ENCODE measurements at regions of chr7 and their contacts with region 1.

Region 1: GRCh38 chr7:95723592-95724180 is 48.7 kb upstream of the DYNC1I1 start:
- DNase-seq: peak; percentile 72
- H3K4me3 ChIP-seq: no peak overlapping the region
- H3K27ac ChIP-seq: no peak overlapping the region
- H3K4me1 ChIP-seq: no peaks in the 10 kb centered on the region
- H3K27me3 ChIP-seq: no peaks in the 10 kb centered on the region; the same call in 1 of the 2 replicates
- CTCF ChIP-seq: peak; percentile 59
- EP300 ChIP-seq: no peak
- RAD21 ChIP-seq: peak; percentile 96

Region 2: DNA sequence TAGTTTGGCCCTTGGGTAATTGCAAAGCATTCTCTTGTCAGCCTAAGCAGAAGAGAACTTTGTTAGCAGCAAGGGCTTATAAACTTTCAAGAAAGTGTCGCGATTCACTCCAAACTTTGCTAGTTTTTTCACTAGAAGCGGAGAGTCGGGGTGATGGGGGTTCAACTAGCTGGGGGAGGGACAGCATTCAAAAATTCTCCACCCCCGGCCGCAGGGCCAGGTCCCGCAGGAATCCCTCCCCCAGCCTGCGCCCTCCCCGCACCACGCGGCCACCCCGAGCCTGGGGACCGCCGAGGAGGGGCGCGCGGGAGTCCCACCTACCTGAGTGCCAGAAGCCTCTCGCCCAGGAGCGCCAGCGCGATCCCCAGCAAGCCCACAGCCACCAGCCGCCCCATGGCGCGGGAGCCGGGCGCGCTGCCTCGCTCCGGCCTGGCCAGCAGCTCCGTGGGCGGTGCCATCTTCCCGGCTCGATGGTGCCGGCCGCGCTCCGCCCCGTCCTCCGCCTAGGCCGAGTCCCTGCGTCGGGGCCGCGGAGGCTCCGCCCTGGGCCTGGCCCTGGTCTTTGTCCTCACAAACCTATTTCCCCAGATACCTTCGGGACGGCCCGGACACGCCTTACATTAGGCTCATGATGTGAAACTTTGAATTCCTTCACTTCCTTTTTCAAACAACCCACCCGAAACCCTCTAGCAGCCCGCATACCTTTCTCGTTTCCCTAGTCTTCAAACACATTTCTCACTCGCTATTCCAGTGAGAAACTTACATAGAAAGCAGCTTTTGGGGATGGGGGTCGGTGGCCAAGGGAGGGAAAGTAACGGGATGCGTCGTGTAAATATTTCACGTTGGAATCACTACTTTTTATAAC is 288.9 kb before region 1 on chr7 and contains the start of gene PON2:
- CTCF ChIA-PET with region 1: no interaction called
- POLR2A ChIA-PET with region 1: no interaction called
- DNase-seq: peak; percentile 94
- H3K4me3 ChIP-seq: peak within 1 kb of the TSS; percentile 70 to 72
- H3K27ac ChIP-seq: peak within 1 kb of the TSS; percentile 64 to 83
- H3K4me1 ChIP-seq: peaks cover 0 to 6% of the 10 kb centered on the region in 2 experiments; a peak in 1 of 4 replicates
- H3K27me3 ChIP-seq: no peaks in the 10 kb centered on the region
- CTCF ChIP-seq: no peak
- EP300 ChIP-seq: no peak
- RAD21 ChIP-seq: no peak
- polyA plus RNA-seq, gene PON2: 125 and 162 TPM in 2 replicates

Region 3: GRCh38 chr7:95710711-95711110 is 13.0 kb before region 1 on chr7:
- CTCF ChIA-PET with region 1: interaction called, 10 read pairs
- POLR2A ChIA-PET with region 1: no interaction called
- DNase-seq: no peak
- H3K4me3 ChIP-seq: no peak overlapping the region
- H3K27ac ChIP-seq: no peak overlapping the region
- H3K4me1 ChIP-seq: no peaks in the 10 kb centered on the region
- H3K27me3 ChIP-seq: no peaks in the 10 kb centered on the region
- CTCF ChIP-seq: no peak
- EP300 ChIP-seq: no peak
- RAD21 ChIP-seq: no peak

Region 4: DNA sequence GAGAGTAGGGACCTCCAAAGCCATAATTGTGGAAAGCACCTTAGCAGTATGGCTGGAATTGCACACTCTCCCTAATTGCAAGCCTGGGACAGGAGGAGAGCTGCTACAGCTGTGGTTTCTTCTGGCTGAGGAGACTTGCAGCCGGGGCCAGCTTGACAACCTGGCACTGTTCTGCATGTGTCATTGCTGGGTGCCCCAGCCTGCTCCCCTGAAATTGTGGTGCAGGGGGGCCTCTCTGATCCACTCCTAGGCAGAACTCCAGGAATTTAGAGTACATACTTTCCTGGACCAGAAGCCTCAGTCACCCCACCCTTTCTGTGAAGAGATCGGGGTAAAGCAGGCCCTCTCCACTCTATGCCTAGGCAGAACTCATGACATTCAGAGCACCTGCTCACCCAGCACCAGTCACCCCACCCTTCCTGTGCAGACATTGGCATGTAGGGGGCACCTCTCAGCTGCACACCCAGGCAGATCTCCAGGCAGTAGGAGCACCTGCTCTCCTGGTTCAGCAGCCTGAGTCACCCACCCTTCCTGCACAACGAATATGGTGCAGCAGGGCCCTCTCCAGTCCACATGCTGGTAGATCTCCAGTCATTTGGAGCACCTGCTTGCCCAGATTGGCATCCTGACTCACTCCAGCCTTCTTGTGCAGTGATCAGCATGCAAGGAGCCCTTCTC is 14.3 kb after region 1 on chr7:
- CTCF ChIA-PET with region 1: interaction called, 24 read pairs
- POLR2A ChIA-PET with region 1: no interaction called
- DNase-seq: no peak
- H3K4me3 ChIP-seq: no peak overlapping the region
- H3K27ac ChIP-seq: no peak overlapping the region
- H3K4me1 ChIP-seq: no peaks in the 10 kb centered on the region
- H3K27me3 ChIP-seq: 0 out of 2 replicates have a peak, but pooled peaks cover 4% of the 10 kb centered on the region
- CTCF ChIP-seq: no peak
- EP300 ChIP-seq: no peak
- RAD21 ChIP-seq: no peak

Region 5: GRCh38 chr7:95758187-95758586 is 34.5 kb after region 1 on chr7:
- CTCF ChIA-PET with region 1: interaction called, 12 read pairs
- POLR2A ChIA-PET with region 1: no interaction called
- DNase-seq: no peak
- H3K4me3 ChIP-seq: no peak overlapping the region
- H3K27ac ChIP-seq: no peak overlapping the region
- H3K4me1 ChIP-seq: no peaks in the 10 kb centered on the region
- H3K27me3 ChIP-seq: no peaks in the 10 kb centered on the region; the same call in 1 of the 2 replicates
- CTCF ChIP-seq: no peak
- EP300 ChIP-seq: no peak
- RAD21 ChIP-seq: no peak

Region 6: DNA sequence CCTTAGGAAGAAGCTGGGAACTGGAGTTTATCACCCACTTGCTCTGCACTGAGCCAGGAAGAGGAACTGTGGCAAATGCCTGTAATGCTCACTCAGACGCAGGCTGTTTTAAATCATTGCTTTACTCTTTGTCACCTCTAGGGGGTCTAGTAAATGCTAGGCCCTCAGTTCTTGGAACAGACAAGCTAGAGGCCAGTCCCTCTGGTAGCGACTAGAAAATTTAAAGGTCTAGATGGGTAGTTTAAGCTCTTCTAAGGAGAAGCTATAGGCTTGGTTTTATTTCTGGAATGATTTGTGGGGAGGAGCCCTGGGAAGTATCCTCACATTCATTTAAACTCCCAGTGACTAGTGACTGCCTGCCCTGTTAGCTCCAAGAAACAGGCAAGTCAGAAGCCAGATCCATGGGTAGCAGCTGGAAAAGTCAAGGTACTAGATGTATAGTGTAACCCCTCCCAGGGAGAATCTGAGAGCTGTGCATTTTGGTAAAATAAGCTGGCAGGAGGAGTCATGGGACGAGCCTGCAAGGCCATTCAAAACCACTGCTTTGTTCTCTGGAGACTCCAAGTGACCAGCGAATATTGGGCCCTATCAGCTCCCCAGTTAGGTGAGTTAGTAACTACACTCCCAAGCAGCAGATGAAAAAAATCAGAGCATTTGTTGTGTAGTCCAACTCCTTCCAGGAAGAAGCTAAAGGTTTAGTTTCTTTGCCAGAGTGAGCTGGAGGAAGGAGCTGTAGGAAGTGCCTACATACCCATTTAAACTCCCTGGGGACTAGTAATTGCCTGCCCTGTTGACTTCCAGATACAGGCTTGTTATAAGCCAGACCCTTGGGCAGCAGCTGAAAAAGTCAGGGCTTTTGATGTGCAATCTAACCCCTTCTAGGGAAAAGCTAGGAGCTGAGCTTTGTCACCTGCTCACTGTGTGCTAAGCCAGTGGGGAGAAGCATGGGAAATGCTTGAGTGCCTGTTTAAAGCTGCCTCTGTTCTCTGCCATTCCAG is 117.6 kb after region 1 on chr7:
- CTCF ChIA-PET with region 1: interaction called, 27 read pairs
- POLR2A ChIA-PET with region 1: no interaction called
- DNase-seq: peak; percentile 46
- H3K4me3 ChIP-seq: no peak overlapping the region; a peak in 1 of 4 replicates
- H3K27ac ChIP-seq: no peak overlapping the region
- H3K4me1 ChIP-seq: no peaks in the 10 kb centered on the region; a peak in 1 of 4 replicates
- H3K27me3 ChIP-seq: no peaks in the 10 kb centered on the region
- CTCF ChIP-seq: peak; percentile 56
- EP300 ChIP-seq: no peak
- RAD21 ChIP-seq: no peak

Region 7: DNA sequence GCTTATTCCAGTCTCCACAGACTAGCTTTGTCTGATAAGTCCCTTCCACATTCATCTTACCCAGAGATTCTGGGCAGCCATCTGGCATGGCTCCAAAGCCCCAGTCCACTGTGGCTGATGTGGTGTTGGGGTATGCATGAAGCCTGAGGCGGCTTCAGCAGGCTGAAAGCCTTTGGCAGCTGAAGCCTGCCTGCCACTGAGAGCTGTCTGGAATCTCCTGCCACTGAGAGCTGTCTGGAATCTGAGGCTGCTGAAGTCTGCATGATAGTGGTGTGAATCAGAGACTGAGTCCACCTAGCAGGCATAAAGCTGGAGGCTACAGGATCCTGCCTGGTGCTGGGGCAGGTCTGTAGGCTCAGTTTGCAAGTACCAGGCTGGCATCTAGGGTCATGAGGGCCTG is 135.7 kb after region 1 on chr7:
- CTCF ChIA-PET with region 1: interaction called, 57 read pairs
- POLR2A ChIA-PET with region 1: no interaction called
- DNase-seq: peak; percentile 50
- H3K4me3 ChIP-seq: no peak overlapping the region
- H3K27ac ChIP-seq: no peak overlapping the region; a peak in 1 of 4 replicates
- H3K4me1 ChIP-seq: no peaks in the 10 kb centered on the region; a peak in 2 of 4 replicates
- H3K27me3 ChIP-seq: no peaks in the 10 kb centered on the region
- CTCF ChIP-seq: no peak
- EP300 ChIP-seq: no peak
- RAD21 ChIP-seq: no peak

Region 8: DNA sequence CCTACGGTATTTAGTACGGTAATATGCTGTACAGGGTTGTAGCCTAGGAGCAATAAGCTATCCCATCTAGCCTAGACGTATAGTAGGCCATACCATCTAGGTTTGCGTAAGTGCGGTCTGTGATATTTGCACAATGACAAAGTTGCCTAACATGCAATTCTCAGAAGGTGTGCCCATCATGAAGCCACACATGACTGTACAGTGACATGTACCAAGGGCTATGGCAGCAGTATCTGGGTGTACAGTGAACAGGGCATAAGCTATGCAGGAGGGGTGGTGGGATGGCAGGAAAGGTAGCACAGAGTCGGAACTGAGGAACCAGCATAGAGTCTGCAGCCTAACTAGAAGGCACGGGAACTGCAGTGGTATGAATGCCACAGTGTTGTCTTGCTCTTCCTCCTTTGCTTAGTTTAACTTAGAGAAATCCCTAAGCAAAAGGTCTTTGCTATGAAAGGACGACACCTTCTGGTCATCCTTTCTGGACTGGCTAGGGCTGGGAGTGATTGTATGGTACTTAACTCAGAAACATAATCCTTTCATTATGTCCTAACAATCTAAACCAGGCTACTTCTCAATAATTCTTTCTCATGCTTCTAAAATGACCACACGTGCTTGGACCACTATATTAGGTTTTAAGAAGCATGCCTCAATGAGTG is 142.2 kb after region 1 on chr7:
- CTCF ChIA-PET with region 1: interaction called, 191 read pairs
- POLR2A ChIA-PET with region 1: no interaction called
- DNase-seq: no peak
- H3K4me3 ChIP-seq: no peak overlapping the region
- H3K27ac ChIP-seq: no peak overlapping the region
- H3K4me1 ChIP-seq: no peaks in the 10 kb centered on the region
- H3K27me3 ChIP-seq: no peaks in the 10 kb centered on the region
- CTCF ChIP-seq: peak; percentile 43
- EP300 ChIP-seq: no peak
- RAD21 ChIP-seq: peak; percentile 55